A673 (cell line): ENCODE measurements at regions of chr2 and their contacts with region 1.

Region 1: GRCh38 chr2:146523196-146523595 is 1321.6 kb upstream of the ACVR2A start:
- DNase-seq: peak; percentile 67
- H3K4me3 ChIP-seq: no peak overlapping the region
- H3K27ac ChIP-seq: no peak overlapping the region
- H3K4me1 ChIP-seq: peaks cover 10% of the 10 kb centered on the region
- H3K27me3 ChIP-seq: no peaks in the 10 kb centered on the region
- CTCF ChIP-seq: peak; percentile 58

Region 2: GRCh38 chr2:145931781-145932352 is 591.3 kb before region 1 on chr2:
- CTCF ChIA-PET with region 1: no interaction called
- POLR2A ChIA-PET with region 1: no interaction called
- intact Hi-C with region 1: loop called (anchors 10 kb)
- DNase-seq: peak; percentile 90
- H3K4me3 ChIP-seq: peak overlapping the region; percentile 16
- H3K27ac ChIP-seq: no peak overlapping the region
- H3K4me1 ChIP-seq: peaks cover 27% of the 10 kb centered on the region
- H3K27me3 ChIP-seq: no peaks in the 10 kb centered on the region
- CTCF ChIP-seq: no peak

Region 3: DNA sequence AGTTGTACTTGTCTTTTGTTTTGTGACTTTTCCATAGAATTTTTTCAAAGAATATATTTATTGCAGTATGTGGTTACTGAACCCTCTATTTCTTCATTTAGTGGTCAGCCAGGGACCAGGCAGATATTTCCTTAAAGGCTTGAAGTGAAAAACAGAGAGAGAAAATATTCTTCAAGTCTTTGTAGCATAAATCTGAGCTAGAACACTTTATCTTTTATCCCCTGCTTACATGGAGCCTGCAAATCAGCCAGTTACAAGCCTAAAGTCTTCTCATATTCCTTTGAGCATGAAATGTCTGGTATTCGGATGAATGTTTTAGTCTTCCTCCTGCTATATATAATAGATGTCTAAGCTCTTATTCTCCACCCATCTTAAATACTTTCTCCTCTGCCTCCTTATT is 235.9 kb before region 1 on chr2:
- CTCF ChIA-PET with region 1: no interaction called
- POLR2A ChIA-PET with region 1: no interaction called
- intact Hi-C with region 1: no loop called
- DNase-seq: no peak
- H3K4me3 ChIP-seq: no peak overlapping the region
- H3K27ac ChIP-seq: no peak overlapping the region
- H3K4me1 ChIP-seq: no peaks in the 10 kb centered on the region
- H3K27me3 ChIP-seq: no peaks in the 10 kb centered on the region
- CTCF ChIP-seq: no peak

Region 4: DNA sequence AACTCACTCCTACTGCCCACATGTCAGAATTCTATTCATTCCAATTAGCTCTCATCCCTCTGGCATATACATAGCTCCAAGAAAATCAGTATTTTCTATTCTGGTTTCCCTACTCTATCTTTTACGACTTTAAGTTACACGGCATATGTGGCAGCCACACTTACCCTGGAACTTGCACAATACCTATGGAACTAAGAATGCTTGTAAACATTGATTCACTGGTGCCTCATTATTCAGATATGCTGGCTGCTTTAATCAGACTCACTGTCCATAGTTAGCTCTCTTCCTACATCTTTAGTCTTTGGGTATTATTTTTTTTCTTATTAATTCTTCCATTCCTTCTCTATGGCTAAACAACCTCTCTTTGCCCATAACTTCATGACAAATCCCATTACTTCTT is 198.2 kb before region 1 on chr2:
- CTCF ChIA-PET with region 1: no interaction called
- POLR2A ChIA-PET with region 1: no interaction called
- intact Hi-C with region 1: loop called (anchors 5 kb)
- DNase-seq: no peak
- H3K4me3 ChIP-seq: no peak overlapping the region
- H3K27ac ChIP-seq: no peak overlapping the region
- H3K4me1 ChIP-seq: peaks cover 28% of the 10 kb centered on the region
- H3K27me3 ChIP-seq: no peaks in the 10 kb centered on the region
- CTCF ChIP-seq: no peak

Region 5: DNA sequence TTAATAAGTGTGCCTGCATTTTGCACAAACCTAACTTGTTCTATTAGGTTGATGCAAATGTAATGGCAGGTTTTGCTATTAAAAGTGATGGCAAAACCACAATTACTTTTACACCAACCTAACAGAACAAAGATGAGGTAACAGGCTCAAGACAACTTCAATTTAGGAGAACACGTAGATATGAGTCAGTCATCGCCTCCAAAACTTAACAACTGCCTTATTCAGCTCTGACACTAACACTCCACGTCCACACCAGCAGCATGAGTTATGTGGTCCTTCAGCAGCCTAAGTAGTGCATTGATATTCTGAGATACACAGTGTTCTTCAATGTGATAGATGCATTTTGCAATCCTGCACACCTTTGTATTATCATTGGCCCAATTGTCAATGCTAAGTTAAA is 146.5 kb after region 1 on chr2:
- CTCF ChIA-PET with region 1: no interaction called
- POLR2A ChIA-PET with region 1: no interaction called
- intact Hi-C with region 1: no loop called
- DNase-seq: no peak
- H3K4me3 ChIP-seq: no peak overlapping the region
- H3K27ac ChIP-seq: no peak overlapping the region
- H3K4me1 ChIP-seq: no peaks in the 10 kb centered on the region
- H3K27me3 ChIP-seq: no peaks in the 10 kb centered on the region
- CTCF ChIP-seq: no peak

Region 6: GRCh38 chr2:146898083-146898482 is 374.9 kb after region 1 on chr2:
- CTCF ChIA-PET with region 1: no interaction called
- POLR2A ChIA-PET with region 1: no interaction called
- intact Hi-C with region 1: no loop called
- DNase-seq: no peak
- H3K4me3 ChIP-seq: no peak overlapping the region
- H3K27ac ChIP-seq: no peak overlapping the region
- H3K4me1 ChIP-seq: no peaks in the 10 kb centered on the region
- H3K27me3 ChIP-seq: no peaks in the 10 kb centered on the region
- CTCF ChIP-seq: no peak